ENCODE measurements at regions of chr10 and their contacts with region 1.

Region 1: DNA sequence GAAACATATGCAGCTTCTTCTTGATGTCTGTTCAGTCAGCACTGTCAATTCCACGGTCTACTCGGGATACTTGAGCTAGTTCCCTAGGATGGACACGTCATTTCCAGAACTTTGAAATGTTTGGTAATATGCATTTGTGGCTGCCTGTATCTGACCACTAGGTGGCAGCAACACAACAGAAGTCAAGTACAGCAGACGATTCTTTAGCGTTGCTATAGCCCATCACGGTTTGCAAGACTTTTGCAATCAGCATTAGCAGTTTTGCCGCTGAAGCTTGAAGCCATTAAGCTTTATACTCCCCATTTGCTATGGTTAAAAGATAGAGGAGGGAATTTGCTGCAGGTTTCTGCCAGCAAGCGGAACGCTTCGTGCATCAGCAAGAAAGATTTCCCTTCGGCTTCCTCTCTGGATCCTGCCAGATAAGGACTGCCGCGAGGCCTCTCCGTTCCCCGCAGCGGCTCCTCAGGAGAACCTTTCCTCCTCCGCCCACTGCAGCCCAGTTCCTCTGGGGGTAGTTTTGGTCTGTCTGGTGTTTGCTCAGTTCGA is 63.5 kb downstream of the ABCC2 start:
- DNase-seq: peak; percentile 75
- H3K4me3 Mint-ChIP-seq: no peak overlapping the region
- H3K27ac Mint-ChIP-seq: no peak overlapping the region
- H3K4me1 Mint-ChIP-seq: peaks cover 4% of the 10 kb centered on the region
- H3K27me3 Mint-ChIP-seq: no peaks in the 10 kb centered on the region

Region 2: GRCh38 chr10:99659031-99659867 is 186.7 kb before region 1 on chr10 and contains the start of gene ENTPD7:
- CTCF ChIA-PET with region 1: no interaction called
- POLR2A ChIA-PET with region 1: no interaction called
- intact Hi-C with region 1: no loop called
- DNase-seq: peak; percentile 96
- H3K4me3 Mint-ChIP-seq: peak within 1 kb of the TSS; percentile 83
- H3K27ac Mint-ChIP-seq: peak within 1 kb of the TSS; percentile 84
- H3K4me1 Mint-ChIP-seq: peaks cover 18% of the 10 kb centered on the region
- H3K27me3 Mint-ChIP-seq: peaks cover 18% of the 10 kb centered on the region
- total RNA-seq, gene ENTPD7: 3.0 to 3.3 TPM

Region 3: DNA sequence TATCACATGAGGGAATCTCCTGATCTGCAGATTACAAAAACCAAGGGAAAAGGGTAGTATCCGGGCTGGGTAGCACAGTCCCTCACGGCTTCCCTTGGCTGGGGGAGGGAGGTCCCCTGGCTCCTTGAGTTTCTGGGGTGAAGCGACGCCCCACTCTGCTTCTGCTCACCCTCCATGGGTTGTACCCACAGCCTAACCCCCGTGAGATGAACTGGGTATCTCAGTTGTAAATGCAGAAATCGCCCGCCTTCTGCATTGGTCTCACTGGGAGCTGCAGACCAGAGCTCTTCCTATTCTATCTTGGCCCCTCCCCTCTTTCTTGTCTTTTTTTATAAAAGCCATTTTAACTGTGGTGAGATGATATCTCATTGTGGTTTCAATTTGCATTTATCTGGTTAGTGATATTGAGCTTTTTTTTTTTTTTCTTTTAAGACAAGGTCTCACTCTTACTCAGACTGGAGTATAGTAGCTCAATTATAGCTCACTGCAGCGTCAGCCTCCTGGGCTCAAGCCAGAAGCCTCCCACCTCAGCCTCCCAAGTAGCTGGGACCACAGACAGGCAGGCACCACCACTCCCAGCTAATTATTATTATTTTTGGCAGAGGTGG is 24.3 kb after region 1 on chr10:
- CTCF ChIA-PET with region 1: interaction called, 17 read pairs
- POLR2A ChIA-PET with region 1: no interaction called
- intact Hi-C with region 1: no loop called
- DNase-seq: peak; percentile 74
- H3K4me3 Mint-ChIP-seq: peak overlapping the region; percentile 42
- H3K27ac Mint-ChIP-seq: no peak overlapping the region
- H3K4me1 Mint-ChIP-seq: peaks cover 26% of the 10 kb centered on the region
- H3K27me3 Mint-ChIP-seq: peaks cover 87% of the 10 kb centered on the region

Region 4: DNA sequence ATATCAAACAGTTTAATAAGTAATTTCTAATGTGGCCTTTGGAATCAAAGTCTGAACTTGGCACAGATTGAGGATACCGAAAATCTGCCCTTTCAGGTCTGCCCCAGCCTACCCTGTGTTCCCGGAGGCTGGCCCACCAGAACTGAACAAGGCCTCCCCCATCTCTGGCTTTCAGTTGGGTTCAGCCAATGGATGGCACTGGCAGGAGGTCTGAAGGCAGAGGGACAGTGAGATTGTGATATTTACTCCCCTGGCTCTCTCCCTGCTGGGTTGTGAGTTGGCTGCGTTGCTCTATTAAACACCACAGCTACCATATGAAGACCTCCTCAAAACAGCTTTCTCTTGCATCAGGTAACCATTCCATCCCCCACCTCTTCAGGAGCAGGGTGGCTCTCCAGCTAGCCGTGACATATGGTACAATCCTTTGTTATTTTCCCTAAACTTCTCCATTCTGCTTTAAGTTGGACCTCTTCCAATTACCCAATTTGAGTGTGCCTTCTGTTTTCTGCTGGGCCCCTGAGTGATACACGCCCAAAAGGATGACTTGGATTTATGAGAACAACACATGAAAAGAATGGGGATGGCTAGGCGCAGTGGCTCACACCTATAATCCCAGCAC is 135.8 kb after region 1 on chr10:
- CTCF ChIA-PET with region 1: interaction called, 12 read pairs
- POLR2A ChIA-PET with region 1: no interaction called
- intact Hi-C with region 1: no loop called
- DNase-seq: no peak
- H3K4me3 Mint-ChIP-seq: no peak overlapping the region
- H3K27ac Mint-ChIP-seq: no peak overlapping the region
- H3K4me1 Mint-ChIP-seq: peaks cover 2% of the 10 kb centered on the region
- H3K27me3 Mint-ChIP-seq: no peaks in the 10 kb centered on the region

Region 5: DNA sequence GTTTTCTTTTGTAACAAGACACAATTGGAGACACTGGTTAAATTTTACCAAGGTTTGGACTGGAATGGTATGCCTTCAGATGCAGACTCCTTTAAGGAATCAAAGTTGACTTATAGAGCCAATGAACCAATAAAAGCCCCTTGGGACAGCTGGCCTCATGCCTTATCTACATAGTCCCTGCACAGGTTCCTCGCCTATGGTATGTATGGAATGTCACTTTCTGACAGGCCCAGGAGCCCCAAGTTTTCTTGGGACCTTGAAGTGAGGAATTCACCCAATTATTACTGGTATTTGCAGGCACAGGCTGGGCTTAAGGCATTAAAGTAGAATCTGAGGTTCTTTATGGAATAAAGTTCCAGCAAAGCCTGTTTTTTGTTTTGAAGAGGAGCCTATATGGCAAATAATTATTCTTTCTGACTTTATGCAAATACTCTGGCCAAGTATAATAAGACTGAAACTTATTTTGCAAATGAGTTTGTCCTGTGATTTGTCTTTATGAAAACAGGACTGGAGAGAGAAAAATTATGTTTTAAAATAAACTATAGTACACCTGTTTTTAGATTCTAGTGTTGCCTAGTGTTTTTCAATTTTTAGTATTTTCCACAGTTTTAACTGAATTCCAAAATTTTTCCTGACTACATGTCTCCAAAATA is 188.0 kb after region 1 on chr10:
- CTCF ChIA-PET with region 1: interaction called, 10 read pairs
- POLR2A ChIA-PET with region 1: no interaction called
- intact Hi-C with region 1: no loop called
- DNase-seq: no peak
- H3K4me3 Mint-ChIP-seq: no peak overlapping the region
- H3K27ac Mint-ChIP-seq: no peak overlapping the region
- H3K4me1 Mint-ChIP-seq: no peaks in the 10 kb centered on the region
- H3K27me3 Mint-ChIP-seq: peaks cover 14% of the 10 kb centered on the region

Region 6: DNA sequence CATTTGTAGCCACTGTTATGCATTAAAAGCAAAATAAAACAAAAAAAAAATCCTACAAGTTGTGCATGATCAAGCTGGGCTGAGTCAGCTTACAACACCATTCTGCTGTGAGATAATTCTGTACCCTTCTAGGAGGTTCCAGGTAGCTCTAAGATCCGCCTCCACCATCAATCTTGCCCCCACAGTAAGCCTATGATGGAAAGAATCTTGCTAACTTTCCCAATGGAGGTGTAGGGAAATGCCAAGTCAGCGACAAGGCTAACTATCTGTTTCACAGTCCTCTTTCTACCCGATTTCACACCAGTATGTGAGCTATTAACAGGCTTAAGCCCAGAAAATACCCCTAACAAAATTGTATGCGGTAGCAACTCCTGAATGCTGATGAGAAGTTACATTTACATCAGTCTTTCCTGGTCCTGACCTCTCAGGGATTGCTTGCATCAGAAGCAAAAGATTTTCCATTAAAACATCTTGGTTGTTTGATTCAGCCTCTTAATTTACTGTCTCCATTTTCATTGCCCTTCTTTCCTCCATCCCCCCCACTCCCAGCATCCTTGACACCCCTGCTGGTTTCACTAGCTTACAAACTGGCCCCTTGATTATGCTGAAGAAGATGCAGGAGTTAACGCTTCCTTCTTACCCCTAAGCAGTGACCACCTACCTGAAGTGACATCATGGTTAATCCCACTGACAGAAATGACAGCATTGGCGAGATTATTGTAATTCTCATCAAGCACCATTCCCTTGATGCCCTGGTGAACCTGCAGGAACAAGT is 208.0 kb after region 1 on chr10:
- CTCF ChIA-PET with region 1: interaction called, 282 read pairs
- POLR2A ChIA-PET with region 1: no interaction called
- intact Hi-C with region 1: no loop called
- DNase-seq: no peak
- H3K4me3 Mint-ChIP-seq: no peak overlapping the region
- H3K27ac Mint-ChIP-seq: no peak overlapping the region
- H3K4me1 Mint-ChIP-seq: no peaks in the 10 kb centered on the region
- H3K27me3 Mint-ChIP-seq: peaks cover 10% of the 10 kb centered on the region

Region 7: DNA sequence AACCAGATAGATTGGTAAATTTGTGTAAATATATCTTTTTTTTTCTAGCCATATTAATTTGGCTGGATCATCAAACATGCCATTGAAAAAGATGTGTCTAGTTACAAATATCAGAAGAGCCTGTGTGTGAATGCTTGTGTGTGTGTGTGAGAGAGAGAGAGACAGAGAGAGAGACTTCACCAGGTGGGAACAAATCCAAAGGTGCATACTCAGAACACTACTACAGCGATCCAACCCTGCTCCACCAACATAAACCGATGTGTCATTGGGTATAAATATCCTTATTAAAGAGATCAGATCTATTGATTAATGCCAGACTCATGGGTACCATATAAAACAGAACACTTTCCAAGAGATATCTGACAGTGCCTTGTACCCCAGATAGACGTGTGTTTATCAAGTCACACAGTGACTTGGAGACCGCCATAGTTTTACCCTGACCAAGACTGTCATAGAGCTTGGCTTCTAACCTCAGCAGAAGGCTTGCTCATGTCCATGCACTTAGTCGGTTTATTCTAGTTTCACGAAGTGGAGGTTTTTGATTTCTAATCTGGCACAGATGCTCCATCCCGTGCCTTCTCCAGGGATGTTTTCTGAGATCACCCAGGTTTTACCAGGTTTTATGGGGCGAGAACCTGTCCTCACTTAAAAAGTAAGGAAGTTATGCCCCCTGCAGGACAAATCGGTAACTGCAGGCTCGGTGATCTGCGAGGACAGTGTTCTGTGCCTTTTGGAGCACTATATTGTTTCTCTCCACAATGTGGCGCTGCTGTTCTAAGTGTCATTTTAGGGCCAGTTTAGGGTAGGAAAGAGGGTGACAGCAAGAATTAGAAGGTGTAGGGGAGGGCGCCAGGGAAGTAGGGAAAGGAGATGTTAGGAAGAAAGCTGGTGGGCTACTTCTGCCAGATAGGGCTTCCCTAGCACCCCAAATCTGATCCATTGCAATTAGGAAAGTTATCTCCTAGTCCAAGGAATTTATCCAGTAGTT is 587.6 kb after region 1 on chr10:
- CTCF ChIA-PET with region 1: interaction called, 5 read pairs
- POLR2A ChIA-PET with region 1: no interaction called
- intact Hi-C with region 1: loop called (anchors 5 kb)
- DNase-seq: peak; percentile 97
- H3K4me3 Mint-ChIP-seq: no peak overlapping the region
- H3K27ac Mint-ChIP-seq: peak overlapping the region; percentile 2
- H3K4me1 Mint-ChIP-seq: peaks cover 2% of the 10 kb centered on the region
- H3K27me3 Mint-ChIP-seq: no peaks in the 10 kb centered on the region

Measured in activated CD4-positive, alpha-beta memory T cell treated with anti-CD3 and anti-CD28 coated beads for 36 hours (primary cell).